ENCODE measurements at regions of chr5 and their contacts with region 1.

Region 1: GRCh38 chr5:69113851-69114250 is 20.0 kb downstream of the SLC30A5 start:
- DNase-seq: no peak
- ATAC-seq: no peak
- H3K4me3 Mint-ChIP-seq: no peak overlapping the region
- H3K27ac Mint-ChIP-seq: no peak overlapping the region
- H3K4me1 Mint-ChIP-seq: no peaks in the 10 kb centered on the region
- H3K27me3 Mint-ChIP-seq: no peaks in the 10 kb centered on the region
- CTCF ChIP-seq: no peak

Region 2: GRCh38 chr5:69206528-69207190 is 92.8 kb after region 1 on chr5:
- CTCF ChIA-PET with region 1: no interaction called
- POLR2A ChIA-PET with region 1: interaction called, 16 read pairs
- intact Hi-C with region 1: no loop called
- DNase-seq: no peak
- ATAC-seq: no peak
- H3K4me3 Mint-ChIP-seq: no peak overlapping the region
- H3K27ac Mint-ChIP-seq: no peak overlapping the region
- H3K4me1 Mint-ChIP-seq: no peaks in the 10 kb centered on the region
- H3K27me3 Mint-ChIP-seq: no peaks in the 10 kb centered on the region
- CTCF ChIP-seq: no peak

Measured in activated B cell treated with CpG ODN at 0.5 μM for 24 hours (primary cell).